HCT116 (cell line): ENCODE measurements at regions of chr10 and their contacts with region 1.

Region 1: GRCh38 chr10:123994417-123995081 is 98.8 kb downstream of the CHST15 start:
- DNase-seq: peak; percentile 74
- ATAC-seq: peak; percentile 78
- H3K4me3 ChIP-seq: peak overlapping the region; percentile 60 to 73
- H3K27ac ChIP-seq: peak overlapping the region; percentile 84
- H3K4me1 ChIP-seq: peaks cover 17 to 30% of the 10 kb centered on the region in 2 experiments
- H3K27me3 ChIP-seq: no peaks in the 10 kb centered on the region
- CTCF ChIP-seq: peak in 2 of 3 experiments; percentile 99; a peak in 4 of 6 replicates
- POLR2A ChIP-seq: no peak
- RAD21 ChIP-seq: no peak

Region 2: DNA sequence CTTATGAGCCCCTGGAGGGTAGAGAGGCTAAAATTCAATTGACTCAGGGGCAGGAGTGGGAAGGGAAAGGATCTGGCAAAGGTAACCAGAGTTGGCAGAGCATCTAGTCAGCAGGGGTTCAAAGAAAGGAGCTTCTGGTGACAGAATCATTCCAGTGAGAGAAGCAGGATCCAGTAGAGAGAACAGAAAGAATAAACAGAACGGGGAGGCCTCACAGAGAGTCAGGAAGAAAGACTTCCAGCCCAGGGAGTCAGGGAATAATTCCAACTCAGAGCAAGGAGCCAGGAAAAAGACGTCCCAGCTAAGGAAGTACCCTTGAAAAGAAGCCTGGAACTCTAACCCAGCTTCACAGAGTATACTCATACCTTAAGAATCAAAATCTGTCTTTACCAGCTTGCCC is 36.3 kb before region 1 on chr10:
- CTCF ChIA-PET with region 1: no interaction called
- POLR2A ChIA-PET with region 1: no interaction called
- RAD21 ChIA-PET with region 1: no interaction called
- intact Hi-C with region 1: no loop called
- DNase-seq: no peak
- ATAC-seq: no peak
- H3K4me3 ChIP-seq: no peak overlapping the region
- H3K27ac ChIP-seq: no peak overlapping the region
- H3K4me1 ChIP-seq: no peaks in the 10 kb centered on the region
- H3K27me3 ChIP-seq: peaks cover 47% of the 10 kb centered on the region; the same call in 1 of the 2 replicates
- CTCF ChIP-seq: no peak
- POLR2A ChIP-seq: no peak
- RAD21 ChIP-seq: no peak

Region 3: GRCh38 chr10:124106241-124106879 is 111.8 kb after region 1 on chr10:
- CTCF ChIA-PET with region 1: interaction called, 10 read pairs
- POLR2A ChIA-PET with region 1: no interaction called
- RAD21 ChIA-PET with region 1: no interaction called
- intact Hi-C with region 1: no loop called
- DNase-seq: peak; percentile 48
- ATAC-seq: peak; percentile 71
- H3K4me3 ChIP-seq: peak overlapping the region in 1 of 2 experiments; percentile 36; a peak in 2 of 4 replicates
- H3K27ac ChIP-seq: peak overlapping the region; percentile 57
- H3K4me1 ChIP-seq: peaks cover 25 to 30% of the 10 kb centered on the region in 2 experiments
- H3K27me3 ChIP-seq: no peaks in the 10 kb centered on the region
- CTCF ChIP-seq: no peak
- POLR2A ChIP-seq: no peak
- RAD21 ChIP-seq: peak; percentile 6; the same call in 1 of the 2 replicates

Region 4: GRCh38 chr10:124217906-124218804 is 223.6 kb after region 1 on chr10:
- CTCF ChIA-PET with region 1: interaction called, 25 read pairs
- POLR2A ChIA-PET with region 1: no interaction called
- RAD21 ChIA-PET with region 1: interaction called, 3 to 6 read pairs
- intact Hi-C with region 1: loop called (anchors 1 kb)
- DNase-seq: peak; percentile 10
- ATAC-seq: peak; percentile 85
- H3K4me3 ChIP-seq: no peak overlapping the region
- H3K27ac ChIP-seq: no peak overlapping the region
- H3K4me1 ChIP-seq: no peaks in the 10 kb centered on the region
- H3K27me3 ChIP-seq: peaks cover 12% of the 10 kb centered on the region; the same call in 1 of the 2 replicates
- CTCF ChIP-seq: peak; percentile 56 to 68 (median 63); a peak in 5 of 6 replicates
- POLR2A ChIP-seq: no peak
- RAD21 ChIP-seq: peak; percentile 82

Region 5: GRCh38 chr10:124378881-124379471 is 384.4 kb after region 1 on chr10:
- CTCF ChIA-PET with region 1: interaction called, 23 read pairs
- POLR2A ChIA-PET with region 1: interaction called, 3 read pairs
- RAD21 ChIA-PET with region 1: interaction called, 4 to 9 read pairs
- intact Hi-C with region 1: no loop called
- DNase-seq: peak; percentile 78
- ATAC-seq: peak; percentile 98
- H3K4me3 ChIP-seq: peak overlapping the region; percentile 10 to 36; a peak in 2 of 4 replicates
- H3K27ac ChIP-seq: 0 out of 2 replicates have a peak overlapping the region, but pooled peaks have one; percentile 0
- H3K4me1 ChIP-seq: peaks cover 12 to 18% of the 10 kb centered on the region in 2 experiments
- H3K27me3 ChIP-seq: no peaks in the 10 kb centered on the region
- CTCF ChIP-seq: no peak
- POLR2A ChIP-seq: no peak
- RAD21 ChIP-seq: no peak; the same call in 1 of the 2 replicates

Region 6: DNA sequence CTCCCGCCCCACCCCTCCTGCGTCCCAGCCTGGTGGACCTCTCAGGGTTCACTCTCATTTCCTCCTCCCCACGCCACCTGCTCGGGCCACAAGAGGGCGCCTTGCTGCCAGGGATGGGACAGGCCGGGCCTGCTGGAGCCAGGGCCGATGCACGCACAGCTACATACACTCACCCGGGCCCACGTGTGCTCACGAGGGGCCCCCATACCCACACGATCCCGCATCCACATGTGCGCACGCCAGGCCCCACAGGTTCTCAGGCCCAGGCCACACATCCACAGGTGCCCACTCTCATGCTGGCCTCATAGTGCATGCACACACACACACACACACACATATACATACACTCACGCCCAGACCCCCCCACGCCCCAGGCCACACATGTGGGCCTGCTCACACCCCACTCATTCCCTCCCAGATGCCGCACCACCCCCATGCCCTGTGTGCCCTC is 535.7 kb after region 1 on chr10:
- CTCF ChIA-PET with region 1: interaction called, 6 read pairs
- POLR2A ChIA-PET with region 1: no interaction called
- RAD21 ChIA-PET with region 1: no interaction called
- intact Hi-C with region 1: loop called (anchors 1 kb)
- DNase-seq: peak; percentile 62
- ATAC-seq: peak; percentile 88
- H3K4me3 ChIP-seq: no peak overlapping the region
- H3K27ac ChIP-seq: no peak overlapping the region
- H3K4me1 ChIP-seq: peaks cover under 1 to 24% of the 10 kb centered on the region in 2 experiments; a peak in 3 of 4 replicates
- H3K27me3 ChIP-seq: no peaks in the 10 kb centered on the region
- CTCF ChIP-seq: peak; percentile 92 to 98 (median 98)
- POLR2A ChIP-seq: no peak
- RAD21 ChIP-seq: peak; percentile 99